B cell (primary cell): ENCODE measurements at regions of chrX and their contacts with region 1.

Region 1: GRCh38 chrX:1521459-1521956 is 15.5 kb downstream of the P2RY8 start:
- DNase-seq: peak; percentile 97
- ATAC-seq: peak; percentile 91
- H3K4me3 ChIP-seq: peak overlapping the region in 4 of 5 experiments; percentile 21 to 64 (median 27)
- H3K4me3 Mint-ChIP-seq: peak overlapping the region; percentile 85
- H3K27ac ChIP-seq: peak overlapping the region; percentile 90 to 98
- H3K27ac Mint-ChIP-seq: peak overlapping the region; percentile 97
- H3K4me1 ChIP-seq: peaks cover 56 to 69% of the 10 kb centered on the region in 2 donors
- H3K4me1 Mint-ChIP-seq: peaks cover 54% of the 10 kb centered on the region
- H3K27me3 ChIP-seq: no peaks in the 10 kb centered on the region
- H3K27me3 Mint-ChIP-seq: no peaks in the 10 kb centered on the region
- CTCF ChIP-seq: no peak

Region 2: GRCh38 chrX:1468250-1468772 is 53.2 kb before region 1 on chrX:
- CTCF ChIA-PET with region 1: no interaction called
- POLR2A ChIA-PET with region 1: no interaction called
- intact Hi-C with region 1: loop called (anchors 1 kb)
- DNase-seq: peak; percentile 86
- ATAC-seq: peak; percentile 67
- H3K4me3 ChIP-seq: no peak overlapping the region
- H3K4me3 Mint-ChIP-seq: peak overlapping the region; percentile 80
- H3K27ac ChIP-seq: peak overlapping the region; percentile 69 to 84
- H3K27ac Mint-ChIP-seq: peak overlapping the region; percentile 95
- H3K4me1 ChIP-seq: peaks cover 68 to 86% of the 10 kb centered on the region in 2 donors
- H3K4me1 Mint-ChIP-seq: peaks cover 68% of the 10 kb centered on the region
- H3K27me3 ChIP-seq: no peaks in the 10 kb centered on the region
- H3K27me3 Mint-ChIP-seq: no peaks in the 10 kb centered on the region
- CTCF ChIP-seq: peak; percentile 25

Region 3: GRCh38 chrX:1481636-1482529 is 39.6 kb before region 1 on chrX:
- CTCF ChIA-PET with region 1: no interaction called
- POLR2A ChIA-PET with region 1: no interaction called
- intact Hi-C with region 1: loop called (anchors 1 kb)
- DNase-seq: peak; percentile 88
- ATAC-seq: peak; percentile 75
- H3K4me3 ChIP-seq: peak overlapping the region in 4 of 5 experiments; percentile 19 to 45 (median 26)
- H3K4me3 Mint-ChIP-seq: peak overlapping the region; percentile 80
- H3K27ac ChIP-seq: peak overlapping the region; percentile 68 to 89
- H3K27ac Mint-ChIP-seq: peak overlapping the region; percentile 98
- H3K4me1 ChIP-seq: peaks cover 44 to 72% of the 10 kb centered on the region in 2 donors
- H3K4me1 Mint-ChIP-seq: peaks cover 74% of the 10 kb centered on the region
- H3K27me3 ChIP-seq: no peaks in the 10 kb centered on the region
- H3K27me3 Mint-ChIP-seq: no peaks in the 10 kb centered on the region
- CTCF ChIP-seq: no peak

Region 4: DNA sequence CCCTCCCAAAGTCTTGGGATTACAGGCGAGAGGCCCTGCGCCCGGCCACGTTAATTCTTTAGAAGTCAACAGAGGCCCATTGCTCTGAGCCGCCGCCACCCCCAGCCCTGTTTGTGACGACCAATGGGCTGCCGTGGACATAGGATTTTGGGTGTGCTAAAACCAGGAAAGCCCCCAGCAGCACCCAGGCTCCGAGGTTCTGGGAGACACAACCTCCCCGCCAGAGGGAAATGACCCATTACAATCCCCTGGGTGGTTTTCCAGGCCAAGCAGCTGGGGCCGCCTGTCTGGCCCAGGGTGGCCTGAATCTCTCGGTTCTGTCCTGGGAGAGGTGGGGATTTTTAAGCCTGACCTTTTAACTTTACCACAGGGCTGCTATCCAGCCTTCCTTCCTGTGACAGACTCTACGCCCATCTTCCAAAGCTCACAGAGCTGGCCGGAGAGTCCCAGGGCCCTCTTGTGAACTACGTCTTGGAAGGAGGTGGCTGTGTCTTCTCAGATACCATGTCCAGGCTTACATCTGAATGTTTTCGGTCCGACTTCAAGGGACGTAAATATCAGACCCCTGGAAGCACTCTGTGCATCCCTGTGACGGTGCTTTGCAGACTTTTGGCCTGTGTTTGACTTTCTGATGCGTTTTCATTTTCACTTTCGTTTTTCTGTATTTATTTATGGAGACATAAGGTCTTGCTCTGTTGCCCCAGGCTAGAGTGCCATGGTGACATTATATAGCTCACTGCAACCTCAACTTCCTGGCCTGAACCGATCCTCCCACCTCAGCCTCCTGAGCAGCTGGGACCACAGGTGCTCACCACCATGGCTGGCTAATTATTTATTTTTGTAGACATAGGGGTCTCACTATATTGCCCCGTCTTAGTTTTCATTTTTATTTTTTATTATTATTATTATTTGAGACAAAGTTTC is 20.5 kb before region 1 on chrX:
- CTCF ChIA-PET with region 1: no interaction called
- POLR2A ChIA-PET with region 1: no interaction called
- intact Hi-C with region 1: loop called (anchors 1 kb)
- DNase-seq: peak; percentile 85
- ATAC-seq: peak; percentile 34
- H3K4me3 ChIP-seq: peak overlapping the region in 3 of 5 experiments; percentile 11 to 50 (median 31)
- H3K4me3 Mint-ChIP-seq: peak overlapping the region; percentile 70
- H3K27ac ChIP-seq: peak overlapping the region; percentile 93 to 94
- H3K27ac Mint-ChIP-seq: peak overlapping the region; percentile 93
- H3K4me1 ChIP-seq: peaks cover 46 to 61% of the 10 kb centered on the region in 2 donors
- H3K4me1 Mint-ChIP-seq: peaks cover 55% of the 10 kb centered on the region
- H3K27me3 ChIP-seq: no peaks in the 10 kb centered on the region
- H3K27me3 Mint-ChIP-seq: no peaks in the 10 kb centered on the region
- CTCF ChIP-seq: no peak

Region 5: DNA sequence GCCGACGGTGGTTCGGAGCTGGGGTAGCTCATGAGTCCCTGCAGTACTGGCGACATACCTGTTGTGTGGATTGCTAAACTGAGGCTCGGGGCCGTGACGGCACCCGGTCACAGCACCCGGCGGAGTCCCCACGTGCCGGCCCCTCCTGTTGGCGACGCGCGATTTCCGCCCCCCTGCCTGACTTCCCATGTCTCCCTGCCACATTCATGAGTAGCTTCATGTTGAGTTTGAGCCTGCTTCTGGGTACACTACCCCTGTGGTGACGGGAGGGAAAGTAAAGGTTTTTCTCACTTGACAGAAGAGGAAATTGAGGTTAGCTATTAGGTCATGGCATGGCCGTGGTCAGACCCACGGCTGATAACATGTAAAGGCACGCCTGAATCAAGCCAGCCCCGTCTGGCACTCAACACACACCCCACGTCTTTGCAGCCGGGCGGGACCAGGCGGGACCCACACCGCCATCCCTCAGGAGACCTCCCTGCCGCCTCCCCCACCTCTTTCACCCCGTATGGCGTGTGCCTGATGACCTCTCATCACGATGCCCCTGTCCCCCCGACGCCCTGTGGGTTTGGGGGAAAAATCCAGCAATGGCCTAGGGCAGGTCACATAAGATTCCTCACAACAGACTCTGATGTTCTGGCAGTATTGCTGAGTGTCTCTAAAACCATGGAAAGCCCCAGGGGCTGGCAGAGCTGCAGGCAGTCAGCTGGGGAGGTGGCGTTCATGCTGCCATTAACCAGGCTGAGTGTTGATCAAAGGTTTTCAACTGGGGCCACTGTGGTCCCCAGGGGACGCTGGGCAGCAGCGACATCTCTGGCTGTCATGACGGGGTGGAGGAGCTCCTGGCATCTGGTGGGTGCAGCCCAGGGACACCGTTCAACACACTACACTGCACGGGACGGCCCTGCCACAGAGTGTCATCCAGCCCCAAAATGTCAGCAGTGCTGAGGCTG is 13.7 kb before region 1 on chrX:
- CTCF ChIA-PET with region 1: no interaction called
- POLR2A ChIA-PET with region 1: no interaction called
- intact Hi-C with region 1: loop called (anchors 1 kb)
- DNase-seq: peak; percentile 87
- ATAC-seq: peak; percentile 80
- H3K4me3 ChIP-seq: no peak overlapping the region
- H3K4me3 Mint-ChIP-seq: no peak overlapping the region
- H3K27ac ChIP-seq: peak overlapping the region; percentile 61 to 65
- H3K27ac Mint-ChIP-seq: no peak overlapping the region
- H3K4me1 ChIP-seq: peaks cover 64 to 66% of the 10 kb centered on the region in 2 donors
- H3K4me1 Mint-ChIP-seq: peaks cover 37% of the 10 kb centered on the region
- H3K27me3 ChIP-seq: no peaks in the 10 kb centered on the region
- H3K27me3 Mint-ChIP-seq: no peaks in the 10 kb centered on the region
- CTCF ChIP-seq: no peak

Region 6: DNA sequence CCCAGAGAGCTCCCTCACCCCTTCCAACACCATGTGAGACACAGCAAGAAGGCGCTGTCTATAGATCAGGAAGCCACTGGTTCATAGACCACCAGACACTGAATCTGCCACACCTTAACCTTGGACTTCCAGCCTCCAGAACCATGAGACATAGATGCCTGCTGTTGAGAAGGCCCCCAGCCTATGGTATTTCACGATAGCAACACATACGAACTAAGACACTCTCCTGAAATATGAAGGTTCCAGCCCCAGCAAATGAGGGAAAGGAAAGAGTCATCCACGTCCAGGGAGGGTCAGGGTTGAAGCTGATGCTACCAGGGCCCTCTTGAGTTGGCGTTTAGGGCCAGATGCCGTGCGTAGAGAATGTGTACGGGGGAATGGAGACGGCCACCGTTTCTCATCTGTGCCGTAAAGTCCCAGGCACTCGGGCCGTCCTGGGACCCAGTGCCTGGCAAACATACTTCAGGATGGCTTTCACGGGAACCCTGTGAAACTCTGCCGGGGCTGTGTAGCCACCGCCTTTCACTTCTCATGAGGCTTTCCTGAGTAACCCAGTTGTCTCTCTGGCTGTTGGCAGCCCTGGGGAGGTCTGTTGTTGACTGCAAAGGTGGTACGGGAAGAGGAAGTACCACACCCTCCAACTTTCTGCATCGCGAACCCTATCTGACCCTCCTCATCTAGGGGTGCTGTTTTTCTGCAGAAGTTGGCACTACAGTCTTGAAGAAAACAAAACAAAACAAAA is 33.1 kb after region 1 on chrX:
- CTCF ChIA-PET with region 1: no interaction called
- POLR2A ChIA-PET with region 1: no interaction called
- intact Hi-C with region 1: loop called (anchors 1 kb)
- DNase-seq: peak; percentile 89
- ATAC-seq: peak; percentile 98
- H3K4me3 ChIP-seq: peak overlapping the region in 1 of 5 experiments; percentile 23
- H3K4me3 Mint-ChIP-seq: peak overlapping the region; percentile 78
- H3K27ac ChIP-seq: peak overlapping the region; percentile 85 to 99
- H3K27ac Mint-ChIP-seq: peak overlapping the region; percentile 99
- H3K4me1 ChIP-seq: peaks cover 50 to 59% of the 10 kb centered on the region in 2 donors
- H3K4me1 Mint-ChIP-seq: peaks cover 53% of the 10 kb centered on the region
- H3K27me3 ChIP-seq: no peaks in the 10 kb centered on the region
- H3K27me3 Mint-ChIP-seq: no peaks in the 10 kb centered on the region
- CTCF ChIP-seq: no peak